ENCODE measurements at regions of chr4 and their contacts with region 1.

Region 1: DNA sequence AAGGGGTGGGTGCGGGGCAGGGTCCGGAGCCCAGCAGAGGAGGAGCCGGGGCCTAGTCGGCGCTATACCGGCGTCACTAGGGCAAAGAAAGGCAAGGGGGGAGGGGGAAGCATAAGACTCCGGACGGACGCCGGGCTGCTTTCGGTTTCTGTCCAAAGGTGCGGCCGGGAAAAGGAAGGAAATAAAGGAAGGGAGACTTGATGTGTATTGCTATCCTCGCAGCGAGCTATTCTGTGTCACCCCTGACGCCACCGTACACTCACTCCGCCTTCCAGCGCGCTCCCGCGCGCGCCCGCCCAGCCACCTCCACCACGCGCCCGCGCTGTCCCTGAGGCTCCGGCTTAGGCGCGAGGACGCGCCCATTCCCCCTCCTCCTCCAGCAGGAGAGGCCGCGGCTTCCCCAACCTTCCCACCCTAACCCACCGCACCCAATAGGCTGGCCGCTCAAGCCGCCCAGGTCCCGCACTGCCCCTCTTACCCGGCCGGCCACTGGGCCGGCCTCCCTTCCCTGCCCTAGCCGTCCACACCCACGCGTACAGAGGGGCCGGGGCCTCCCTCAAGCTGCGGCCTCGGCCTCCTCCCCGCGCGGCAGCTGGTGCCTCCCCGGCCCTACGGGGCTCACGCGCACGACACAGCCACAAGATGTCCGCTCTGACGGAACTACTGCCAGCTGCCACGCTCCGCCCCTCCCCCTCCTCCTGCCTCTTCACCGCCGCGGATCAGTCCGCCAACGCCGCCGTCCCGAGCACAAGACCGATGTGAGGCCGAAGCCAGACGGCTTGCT is at the start of gene UBE2D3:
- DNase-seq: peak; percentile 95 to 97 (median 96)
- H3K4me3 ChIP-seq: peak within 1 kb of the TSS; percentile 96 to 97
- H3K4me3 Mint-ChIP-seq: no peak within 1 kb of the TSS
- H3K27ac ChIP-seq: peak within 1 kb of the TSS; percentile 100
- H3K27ac Mint-ChIP-seq: no peak within 1 kb of the TSS
- H3K4me1 ChIP-seq: peaks cover 43% of the 10 kb centered on the region
- H3K4me1 Mint-ChIP-seq: peaks cover 25 to 42% (median 29%) of the 10 kb centered on the region in 4 donors
- H3K27me3 ChIP-seq: no peaks in the 10 kb centered on the region
- H3K27me3 Mint-ChIP-seq: peaks cover 0 to 2% of the 10 kb centered on the region in 2 donors
- total RNA-seq, gene UBE2D3: 337 to 339 TPM

Region 2: GRCh38 chr4:102169345-102169744 is 657.7 kb before region 1 on chr4:
- CTCF ChIA-PET with region 1: no interaction called
- POLR2A ChIA-PET with region 1: no interaction called
- intact Hi-C with region 1: no loop called
- DNase-seq: no peak
- H3K4me3 ChIP-seq: no peak overlapping the region
- H3K4me3 Mint-ChIP-seq: no peak overlapping the region
- H3K27ac ChIP-seq: no peak overlapping the region
- H3K27ac Mint-ChIP-seq: no peak overlapping the region
- H3K4me1 ChIP-seq: no peaks in the 10 kb centered on the region
- H3K4me1 Mint-ChIP-seq: no peaks in the 10 kb centered on the region
- H3K27me3 ChIP-seq: no peaks in the 10 kb centered on the region
- H3K27me3 Mint-ChIP-seq: peaks cover 0 to 1% of the 10 kb centered on the region in 2 donors

Region 3: DNA sequence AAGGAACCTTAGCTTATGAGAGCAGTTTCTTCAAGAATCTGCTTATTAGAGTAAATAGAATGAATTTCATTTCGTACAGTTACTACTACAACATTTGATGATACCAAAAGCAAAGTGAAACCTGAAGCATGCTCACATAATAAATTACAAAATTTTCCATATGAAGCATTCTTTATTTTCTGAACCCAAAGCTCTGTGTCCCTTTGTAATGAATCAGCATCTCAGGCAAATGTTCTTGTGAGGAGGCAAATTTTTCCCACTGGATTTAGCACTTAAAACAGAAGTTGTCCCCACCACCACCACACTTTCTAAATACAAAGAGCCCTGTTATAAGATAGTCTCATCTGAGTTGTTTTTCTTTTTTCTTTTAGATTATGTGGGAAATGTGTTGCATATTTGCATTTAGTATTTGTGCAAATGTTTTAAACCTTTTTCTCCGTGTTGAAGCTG is 396.6 kb before region 1 on chr4:
- CTCF ChIA-PET with region 1: interaction called, 6 read pairs
- POLR2A ChIA-PET with region 1: interaction called, 7 read pairs
- intact Hi-C with region 1: loop called (anchors 5 kb)
- DNase-seq: no peak
- H3K4me3 ChIP-seq: peak overlapping the region; percentile 53 to 63
- H3K4me3 Mint-ChIP-seq: peak overlapping the region; percentile 85 to 92 (median 90)
- H3K27ac ChIP-seq: peak overlapping the region; percentile 49
- H3K27ac Mint-ChIP-seq: peak overlapping the region in 6 of 7 donors; percentile 77 to 95 (median 90)
- H3K4me1 ChIP-seq: peaks cover 5% of the 10 kb centered on the region
- H3K4me1 Mint-ChIP-seq: peaks cover 3 to 7% (median 4%) of the 10 kb centered on the region in 4 donors
- H3K27me3 ChIP-seq: no peaks in the 10 kb centered on the region
- H3K27me3 Mint-ChIP-seq: no peaks in the 10 kb centered on the region

Region 4: GRCh38 chr4:102525097-102525496 is 302.0 kb before region 1 on chr4:
- CTCF ChIA-PET with region 1: no interaction called
- POLR2A ChIA-PET with region 1: interaction called, 11 read pairs
- intact Hi-C with region 1: no loop called
- DNase-seq: no peak
- H3K4me3 ChIP-seq: no peak overlapping the region
- H3K4me3 Mint-ChIP-seq: peak overlapping the region in 2 of 8 donors; percentile 10 to 57
- H3K27ac ChIP-seq: no peak overlapping the region
- H3K27ac Mint-ChIP-seq: peak overlapping the region in 6 of 7 donors; percentile 16 to 65 (median 51)
- H3K4me1 ChIP-seq: peaks cover 90% of the 10 kb centered on the region
- H3K4me1 Mint-ChIP-seq: peaks cover 59 to 94% (median 70%) of the 10 kb centered on the region in 4 donors
- H3K27me3 ChIP-seq: no peaks in the 10 kb centered on the region
- H3K27me3 Mint-ChIP-seq: no peaks in the 10 kb centered on the region

Region 5: GRCh38 chr4:102760645-102761295 is 66.3 kb before region 1 on chr4 and contains the start of gene MANBA:
- CTCF ChIA-PET with region 1: interaction called, 9 read pairs
- POLR2A ChIA-PET with region 1: interaction called, 110 read pairs
- intact Hi-C with region 1: loop called (anchors 1 kb)
- DNase-seq: peak; percentile 78 to 84 (median 79)
- H3K4me3 ChIP-seq: peak within 1 kb of the TSS; percentile 77 to 89
- H3K4me3 Mint-ChIP-seq: peak within 1 kb of the TSS; percentile 92 to 99 (median 98)
- H3K27ac ChIP-seq: peak within 1 kb of the TSS; percentile 65
- H3K27ac Mint-ChIP-seq: peak within 1 kb of the TSS; percentile 75 to 96 (median 94)
- H3K4me1 ChIP-seq: peaks cover 18% of the 10 kb centered on the region
- H3K4me1 Mint-ChIP-seq: peaks cover 24 to 47% (median 36%) of the 10 kb centered on the region in 4 donors
- H3K27me3 ChIP-seq: no peaks in the 10 kb centered on the region
- H3K27me3 Mint-ChIP-seq: peaks cover 0 to 3% of the 10 kb centered on the region in 2 donors
- total RNA-seq, gene MANBA: 30.0 to 33.2 TPM

Region 6: GRCh38 chr4:102815981-102816380 is 11.1 kb before region 1 on chr4:
- CTCF ChIA-PET with region 1: interaction called, 17 read pairs
- POLR2A ChIA-PET with region 1: interaction called, 161 read pairs
- intact Hi-C with region 1: loop called (anchors 1 kb)
- DNase-seq: no peak
- H3K4me3 ChIP-seq: no peak overlapping the region
- H3K4me3 Mint-ChIP-seq: peak overlapping the region in 6 of 8 donors; percentile 7 to 84 (median 70)
- H3K27ac ChIP-seq: no peak overlapping the region
- H3K27ac Mint-ChIP-seq: peak overlapping the region in 5 of 7 donors; percentile 23 to 77 (median 45)
- H3K4me1 ChIP-seq: peaks cover 98% of the 10 kb centered on the region
- H3K4me1 Mint-ChIP-seq: peaks cover 70 to 92% (median 81%) of the 10 kb centered on the region in 4 donors
- H3K27me3 ChIP-seq: no peaks in the 10 kb centered on the region
- H3K27me3 Mint-ChIP-seq: no peaks in the 10 kb centered on the region

Region 7: DNA sequence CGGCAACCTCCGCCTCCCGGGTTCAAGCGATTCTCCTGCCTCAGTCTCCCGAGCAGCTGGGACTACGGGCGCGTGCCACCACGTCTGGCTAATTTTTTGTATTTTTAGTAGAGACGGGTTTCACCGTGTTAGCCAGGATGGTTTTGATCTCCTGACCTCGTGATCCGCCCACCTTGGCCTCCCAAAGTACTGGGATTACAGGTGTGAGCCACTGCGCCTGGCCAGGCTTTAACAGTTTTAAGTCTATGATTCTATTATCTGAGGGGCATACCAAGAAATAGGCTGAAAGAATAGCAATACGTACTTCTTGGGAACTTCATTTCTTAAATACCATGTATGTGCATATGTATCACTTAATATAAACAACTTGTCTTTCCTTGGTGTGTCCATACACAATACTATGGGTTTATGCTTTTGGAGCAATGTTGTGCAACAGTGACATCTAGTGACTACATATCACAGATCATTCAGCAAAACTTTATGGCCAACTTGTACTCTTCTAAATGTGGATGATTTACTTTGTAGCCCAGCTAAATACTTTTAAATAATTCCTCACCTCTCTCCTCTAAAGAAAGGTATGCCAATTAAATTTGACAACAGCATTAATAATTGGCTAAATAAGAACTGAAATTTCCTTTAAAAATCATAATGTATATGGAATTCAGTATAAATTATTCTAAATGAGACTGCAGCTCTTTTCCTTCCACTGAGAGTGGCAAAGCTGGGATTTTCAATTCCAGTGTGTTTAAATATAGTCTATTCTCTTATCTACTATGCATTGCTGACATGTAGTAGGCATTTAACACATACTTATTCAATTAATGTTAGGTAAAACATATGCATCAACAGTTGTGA is 182.0 kb after region 1 on chr4:
- CTCF ChIA-PET with region 1: interaction called, 7 read pairs
- POLR2A ChIA-PET with region 1: interaction called, 3 read pairs
- intact Hi-C with region 1: loop called (anchors 2 kb)
- DNase-seq: peak; percentile 35 to 61 (median 59)
- H3K4me3 ChIP-seq: no peak overlapping the region
- H3K4me3 Mint-ChIP-seq: no peak overlapping the region
- H3K27ac ChIP-seq: no peak overlapping the region
- H3K27ac Mint-ChIP-seq: no peak overlapping the region
- H3K4me1 ChIP-seq: no peaks in the 10 kb centered on the region
- H3K4me1 Mint-ChIP-seq: peaks cover 0 to 2% (median 1%) of the 10 kb centered on the region in 4 donors
- H3K27me3 ChIP-seq: no peaks in the 10 kb centered on the region
- H3K27me3 Mint-ChIP-seq: peaks cover 0 to 1% of the 10 kb centered on the region in 2 donors

Region 8: GRCh38 chr4:103099691-103100392 is 272.8 kb after region 1 on chr4 and contains the start of gene BDH2:
- CTCF ChIA-PET with region 1: no interaction called
- POLR2A ChIA-PET with region 1: interaction called, 3 read pairs
- intact Hi-C with region 1: loop called (anchors 1 kb)
- DNase-seq: peak; percentile 77 to 84 (median 82)
- H3K4me3 ChIP-seq: peak within 1 kb of the TSS; percentile 4 to 54
- H3K4me3 Mint-ChIP-seq: peak within 1 kb of the TSS; percentile 81 to 97 (median 92)
- H3K27ac ChIP-seq: peak within 1 kb of the TSS; percentile 42
- H3K27ac Mint-ChIP-seq: peak within 1 kb of the TSS; percentile 59 to 95 (median 89)
- H3K4me1 ChIP-seq: peaks cover 14% of the 10 kb centered on the region
- H3K4me1 Mint-ChIP-seq: peaks cover 12 to 34% (median 24%) of the 10 kb centered on the region in 4 donors
- H3K27me3 ChIP-seq: no peaks in the 10 kb centered on the region
- H3K27me3 Mint-ChIP-seq: no peaks in the 10 kb centered on the region
- total RNA-seq, gene BDH2: 20.1 to 20.5 TPM

Measured in CD4-positive, alpha-beta memory T cell (primary cell).